Right ventricle myocardium inferior (tissue), 1 donor: ENCODE measurements at regions of chr3 and their contacts with region 1.

Region 1: GRCh38 chr3:191391861-191392808 is 61.8 kb upstream of the UTS2B start:
- DNase-seq: no peak
- ATAC-seq: no peak

Region 2: GRCh38 chr3:191141728-191142127 is 250.4 kb before region 1 on chr3:
- intact Hi-C with region 1: no loop called
- DNase-seq: no peak
- ATAC-seq: no peak

Region 3: GRCh38 chr3:191220908-191221307 is 171.2 kb before region 1 on chr3:
- intact Hi-C with region 1: no loop called
- DNase-seq: no peak
- ATAC-seq: no peak

Region 4: DNA sequence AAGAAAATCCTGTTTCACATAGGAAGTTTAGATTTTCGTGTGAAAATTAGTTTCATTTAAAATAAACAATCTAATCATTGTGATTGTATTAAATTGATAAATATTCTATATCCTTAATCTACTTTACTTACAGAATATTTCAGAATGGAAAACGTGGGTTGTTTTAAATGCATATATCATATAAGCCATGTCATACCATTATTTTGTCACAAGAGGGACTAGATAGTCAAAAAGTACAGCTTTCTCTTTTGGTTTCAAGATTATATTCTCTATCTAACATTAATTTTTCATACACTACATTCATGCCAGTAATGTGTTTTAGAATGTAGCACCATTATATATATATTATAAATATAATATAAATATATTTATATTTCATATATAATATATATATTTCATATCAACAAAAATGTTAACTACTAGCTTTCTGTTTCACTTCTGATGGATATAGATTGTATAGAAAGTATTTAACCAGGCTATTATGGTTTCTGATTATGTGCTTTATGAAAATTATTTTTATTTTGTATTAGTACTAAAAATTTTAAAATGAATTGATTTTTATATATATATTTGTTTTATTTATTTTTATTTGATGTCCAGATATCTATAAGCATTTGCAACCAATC is 147.8 kb before region 1 on chr3:
- intact Hi-C with region 1: loop called (anchors 10 kb)
- DNase-seq: no peak
- ATAC-seq: no peak

Region 5: GRCh38 chr3:191376516-191377141 is 15.5 kb before region 1 on chr3:
- intact Hi-C with region 1: no loop called
- DNase-seq: no peak
- ATAC-seq: no peak